Tibial artery (tissue), 4 donors: ENCODE measurements at regions of chr10 and their contacts with region 1.

Region 1: DNA sequence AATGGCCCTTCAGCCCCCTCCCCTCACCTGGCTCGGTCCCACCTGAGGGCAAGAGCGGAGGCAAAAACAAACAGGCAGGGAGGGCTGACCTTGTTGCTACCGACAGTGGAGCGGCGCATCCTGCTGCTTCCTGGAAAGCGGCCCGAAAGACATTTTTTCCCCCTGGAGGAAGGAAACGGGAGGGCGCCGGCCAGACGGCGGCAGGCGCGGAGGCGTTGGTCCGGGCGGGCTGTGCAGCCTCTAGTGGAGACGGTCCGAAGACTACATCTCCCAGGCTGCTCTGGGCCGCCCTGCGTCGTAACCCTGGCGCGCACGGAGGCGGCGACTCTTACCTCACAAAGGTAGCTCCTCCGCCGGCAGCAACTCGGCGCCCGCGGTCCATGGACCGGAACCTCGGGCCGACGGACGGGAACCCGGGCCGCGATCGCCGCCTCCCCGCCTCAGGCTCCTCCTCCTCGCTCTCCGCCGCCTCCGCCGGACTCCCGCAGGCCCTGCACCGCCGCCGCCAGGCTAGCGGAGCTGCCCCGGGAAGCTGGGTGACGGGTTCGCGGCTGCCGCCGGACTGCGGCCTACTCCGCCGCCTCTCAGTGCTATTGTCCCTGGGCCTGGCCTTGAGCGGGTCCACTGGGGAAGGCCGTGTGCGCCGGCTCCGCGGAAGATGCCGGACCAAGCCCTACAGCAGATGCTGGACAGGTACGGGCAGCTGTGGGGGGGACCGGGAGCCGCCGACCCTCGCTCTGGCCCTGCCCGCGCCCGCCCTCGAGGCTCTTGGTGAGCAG is at the starts of genes CPEB3 and MARCHF5:
- DNase-seq: peak; percentile 96 to 98
- H3K4me3 ChIP-seq: peak within 1 kb of the TSS; percentile 68 to 100
- H3K27ac ChIP-seq: peak within 1 kb of the TSS; percentile 93 to 98
- H3K4me1 ChIP-seq: peaks cover 0 to 26% (median 8%) of the 10 kb centered on the region in 4 donors
- H3K27me3 ChIP-seq: no peaks in the 10 kb centered on the region
- CTCF ChIP-seq: peak; percentile 65 to 92

Region 2: DNA sequence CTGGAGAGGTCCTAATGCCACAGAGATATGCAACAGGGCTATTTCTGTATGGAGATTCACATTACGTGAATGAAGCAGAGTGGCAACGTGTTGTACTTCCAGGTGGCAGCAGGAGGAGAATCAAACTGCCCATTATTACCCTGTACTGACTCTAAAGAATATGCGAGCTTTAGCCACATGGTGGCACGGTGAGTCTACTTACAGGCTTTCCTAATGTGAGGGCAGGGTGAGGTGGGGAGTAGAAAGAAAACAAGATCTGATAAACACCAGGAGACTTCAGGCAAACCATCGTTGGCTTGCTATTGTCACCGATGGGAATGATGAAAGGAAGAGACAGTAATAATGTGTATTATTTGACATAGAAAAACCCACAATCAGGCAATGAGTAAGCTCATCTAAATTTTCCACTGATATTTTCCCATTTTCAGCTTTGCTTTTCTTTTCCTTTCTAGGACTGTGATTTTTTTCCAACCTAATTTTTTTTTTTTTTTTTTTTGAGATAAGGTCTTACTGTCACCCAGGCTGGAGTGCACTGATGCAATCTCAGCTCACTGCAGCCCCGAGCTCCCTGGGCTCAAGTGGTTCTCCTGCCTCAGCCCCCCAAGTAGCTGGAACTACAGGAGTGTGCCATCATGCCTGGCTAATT is 203.2 kb before region 1 on chr10:
- intact Hi-C with region 1: loop called (anchors 5 kb)
- DNase-seq: peak; percentile 72 to 73
- H3K4me3 ChIP-seq: no peak overlapping the region
- H3K27ac ChIP-seq: no peak overlapping the region
- H3K4me1 ChIP-seq: peaks cover 0 to 12% (median 1%) of the 10 kb centered on the region in 4 donors
- H3K27me3 ChIP-seq: no peaks in the 10 kb centered on the region
- CTCF ChIP-seq: peak; percentile 78 to 87

Region 3: GRCh38 chr10:92239600-92240288 is 51.3 kb before region 1 on chr10:
- intact Hi-C with region 1: loop called (anchors 10 kb)
- DNase-seq: peak; percentile 26 to 70
- H3K4me3 ChIP-seq: peak overlapping the region; percentile 68 to 88
- H3K27ac ChIP-seq: peak overlapping the region; percentile 66 to 72
- H3K4me1 ChIP-seq: peaks cover 0 to 30% (median 20%) of the 10 kb centered on the region in 4 donors
- H3K27me3 ChIP-seq: no peaks in the 10 kb centered on the region
- CTCF ChIP-seq: no peak

Region 4: GRCh38 chr10:92712016-92712889 is 421.2 kb after region 1 on chr10:
- intact Hi-C with region 1: no loop called
- DNase-seq: no peak
- H3K4me3 ChIP-seq: no peak overlapping the region
- H3K27ac ChIP-seq: no peak overlapping the region
- H3K4me1 ChIP-seq: no peaks in the 10 kb centered on the region
- H3K27me3 ChIP-seq: no peaks in the 10 kb centered on the region
- CTCF ChIP-seq: no peak